Body of pancreas (tissue), 4 donors: ENCODE measurements at regions of chr16 and their contacts with region 1.

Region 1: DNA sequence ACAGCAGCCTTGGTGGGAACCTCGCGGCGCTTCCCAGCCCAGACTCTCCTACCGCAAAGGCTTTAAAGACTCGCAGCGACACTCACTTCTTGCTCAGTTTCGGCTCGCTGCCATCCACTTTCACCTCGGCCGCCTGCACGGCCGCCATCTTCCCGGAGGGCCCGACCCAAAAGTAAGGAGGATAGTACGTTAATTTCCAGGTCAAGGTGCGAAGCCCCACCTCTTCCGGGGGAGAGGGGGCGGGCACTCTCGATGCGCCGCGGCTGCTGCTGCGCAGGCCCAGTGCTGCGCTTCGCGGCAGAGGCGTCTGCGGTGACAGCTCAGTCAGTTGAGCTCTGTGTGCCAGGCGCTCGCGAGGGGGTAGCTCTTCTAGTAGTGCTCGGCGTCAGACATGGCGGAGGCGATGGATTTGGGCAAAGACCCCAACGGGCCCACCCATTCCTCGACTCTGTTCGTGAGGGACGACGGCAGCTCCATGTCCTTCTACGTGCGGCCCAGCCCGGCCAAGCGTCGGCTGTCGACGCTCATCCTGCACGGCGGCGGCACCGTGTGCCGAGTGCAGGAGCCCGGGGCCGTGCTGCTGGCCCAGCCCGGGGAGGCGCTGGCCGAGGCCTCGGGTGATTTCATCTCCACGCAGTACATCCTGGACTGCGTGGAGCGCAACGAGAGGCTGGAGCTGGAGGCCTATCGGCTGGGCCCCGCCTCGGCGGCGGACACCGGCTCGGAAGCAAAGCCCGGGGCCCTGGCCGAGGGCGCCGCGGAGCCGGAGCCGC is at the starts of genes KARS1 and TERF2IP:
- DNase-seq: peak; percentile 92 to 95 (median 93)
- ATAC-seq: peak; percentile 96
- H3K4me3 ChIP-seq: peak within 1 kb of the TSS; percentile 79 to 89
- H3K27ac ChIP-seq: peak within 1 kb of the TSS; percentile 84 to 98 (median 92)
- H3K4me1 ChIP-seq: peaks cover 52% of the 10 kb centered on the region
- H3K27me3 ChIP-seq: no peaks in the 10 kb centered on the region
- CTCF ChIP-seq: no peak
- POLR2A ChIP-seq: peak; percentile 86 to 98 (median 96)
- total RNA-seq, gene KARS1: 49.8 TPM
- total RNA-seq, gene TERF2IP: 37.6 to 77.1 TPM

Region 2: DNA sequence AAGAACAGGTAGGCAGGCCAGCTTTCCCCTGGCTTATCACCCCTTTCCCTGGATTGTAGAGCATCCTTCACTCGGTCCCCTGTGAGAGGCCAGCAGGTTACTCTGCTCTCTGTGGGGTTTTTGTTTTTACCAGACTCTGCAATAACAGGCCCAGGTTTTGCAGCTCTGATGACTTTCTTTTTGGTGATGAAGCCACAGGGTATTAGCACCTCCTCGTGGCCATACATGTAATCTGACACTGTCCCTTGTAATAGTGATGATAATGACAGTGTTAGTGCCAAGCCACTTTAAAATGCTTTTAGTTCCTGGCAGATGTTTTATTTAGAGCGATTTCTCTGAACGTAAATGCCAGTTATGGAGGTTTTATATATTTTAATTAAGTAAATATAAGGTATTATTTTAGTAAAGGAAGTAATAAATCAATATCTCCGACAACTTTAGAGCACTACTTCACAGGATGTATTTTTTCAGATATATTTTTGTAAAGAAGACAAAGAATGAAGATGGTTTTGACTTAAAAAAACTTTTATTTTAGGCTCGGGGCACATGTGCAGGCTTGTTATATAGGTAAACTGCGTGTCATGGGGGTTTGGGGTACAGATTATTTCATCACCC is 116.6 kb after region 1 on chr16:
- intact Hi-C with region 1: loop called (anchors 10 kb)
- DNase-seq: peak; percentile 71 to 80 (median 74)
- ATAC-seq: peak; percentile 96
- H3K4me3 ChIP-seq: no peak overlapping the region
- H3K27ac ChIP-seq: peak overlapping the region in 1 of 4 donors; percentile 14
- H3K4me1 ChIP-seq: peaks cover 4% of the 10 kb centered on the region
- H3K27me3 ChIP-seq: no peaks in the 10 kb centered on the region
- CTCF ChIP-seq: peak; percentile 68 to 93 (median 89)
- POLR2A ChIP-seq: no peak